Calu3 (cell line): ENCODE measurements at regions of chr4 and their contacts with region 1.

Region 1: DNA sequence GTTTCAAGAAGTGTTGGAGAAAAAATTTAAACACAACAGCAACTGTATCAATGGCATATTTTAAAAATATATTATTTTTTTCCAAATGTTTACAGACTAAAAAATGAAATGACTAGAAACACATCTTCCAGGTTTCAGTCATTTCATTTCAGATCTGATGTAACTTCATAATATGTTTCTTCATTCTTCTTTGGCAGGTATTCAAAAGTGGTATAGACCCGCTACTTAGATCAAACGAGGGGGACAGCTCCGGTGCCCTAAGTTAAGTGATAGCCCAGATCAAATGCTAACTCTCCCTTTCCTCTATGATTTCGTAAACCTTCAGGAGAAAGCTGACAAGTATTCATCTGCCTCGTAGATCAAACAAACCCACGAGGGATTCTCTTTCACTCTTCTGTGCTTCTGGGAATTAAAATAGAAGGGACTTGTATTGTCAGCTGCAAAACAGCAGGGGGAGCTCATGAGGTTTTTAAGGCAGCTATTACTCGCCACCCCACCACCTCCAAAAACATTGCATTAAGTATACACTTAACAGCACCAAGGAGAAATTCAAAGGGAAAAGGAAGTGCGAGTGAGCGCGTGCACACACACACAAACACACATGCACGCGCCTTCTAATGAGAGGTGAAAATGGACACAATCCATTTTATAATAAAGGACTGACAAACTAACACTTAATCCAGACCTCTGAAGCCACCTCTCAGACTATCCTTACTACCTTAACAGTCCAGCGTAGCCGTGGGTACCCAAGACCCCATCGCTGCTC is 21.4 kb downstream of the HELT start:
- DNase-seq: peak; percentile 61
- H3K4me3 Mint-ChIP-seq: peak overlapping the region; percentile 60
- H3K27ac Mint-ChIP-seq: peak overlapping the region; percentile 73
- H3K4me1 Mint-ChIP-seq: peaks cover 20% of the 10 kb centered on the region
- H3K27me3 Mint-ChIP-seq: no peaks in the 10 kb centered on the region
- CTCF ChIP-seq: peak; percentile 38

Region 2: DNA sequence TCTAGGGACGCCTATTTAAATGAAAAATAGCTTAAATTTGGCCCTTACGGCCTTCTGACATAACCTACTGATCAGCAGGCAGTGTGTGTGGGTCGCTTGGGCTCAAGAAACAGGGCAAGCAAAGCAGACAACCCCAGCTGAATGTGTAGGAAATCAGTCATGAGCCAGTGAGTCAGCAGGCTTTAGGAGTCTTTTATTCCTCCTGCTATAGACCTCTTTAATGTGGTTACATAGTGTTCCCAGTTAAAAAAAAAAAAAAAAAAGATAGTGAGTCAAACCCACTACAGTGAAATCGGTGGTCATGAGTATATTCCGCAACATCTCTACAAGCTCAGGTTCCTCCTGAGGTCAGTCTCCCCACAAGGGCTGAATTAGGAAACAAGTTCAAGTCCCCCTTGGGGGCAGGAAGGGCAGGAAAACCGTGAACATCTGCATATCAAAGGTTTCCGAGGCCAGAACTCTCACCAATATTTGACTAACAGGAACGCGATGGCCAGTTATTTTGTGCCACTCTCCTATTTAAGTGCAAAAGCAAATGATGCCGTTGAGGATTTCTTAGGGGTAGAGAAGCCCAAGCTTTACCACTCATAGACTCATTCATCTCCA is 246.6 kb before region 1 on chr4:
- CTCF ChIA-PET with region 1: no interaction called
- intact Hi-C with region 1: no loop called
- DNase-seq: no peak
- H3K4me3 Mint-ChIP-seq: no peak overlapping the region
- H3K27ac Mint-ChIP-seq: no peak overlapping the region
- H3K4me1 Mint-ChIP-seq: no peaks in the 10 kb centered on the region
- H3K27me3 Mint-ChIP-seq: no peaks in the 10 kb centered on the region
- CTCF ChIP-seq: no peak

Region 3: GRCh38 chr4:185134307-185134869 is 94.7 kb after region 1 on chr4:
- CTCF ChIA-PET with region 1: interaction called, 23 read pairs
- intact Hi-C with region 1: loop called (anchors 1 kb)
- DNase-seq: peak; percentile 6
- H3K4me3 Mint-ChIP-seq: no peak overlapping the region
- H3K27ac Mint-ChIP-seq: no peak overlapping the region
- H3K4me1 Mint-ChIP-seq: no peaks in the 10 kb centered on the region
- H3K27me3 Mint-ChIP-seq: no peaks in the 10 kb centered on the region
- CTCF ChIP-seq: peak; percentile 36